ENCODE measurements at regions of chrX and their contacts with region 1.

Region 1: DNA sequence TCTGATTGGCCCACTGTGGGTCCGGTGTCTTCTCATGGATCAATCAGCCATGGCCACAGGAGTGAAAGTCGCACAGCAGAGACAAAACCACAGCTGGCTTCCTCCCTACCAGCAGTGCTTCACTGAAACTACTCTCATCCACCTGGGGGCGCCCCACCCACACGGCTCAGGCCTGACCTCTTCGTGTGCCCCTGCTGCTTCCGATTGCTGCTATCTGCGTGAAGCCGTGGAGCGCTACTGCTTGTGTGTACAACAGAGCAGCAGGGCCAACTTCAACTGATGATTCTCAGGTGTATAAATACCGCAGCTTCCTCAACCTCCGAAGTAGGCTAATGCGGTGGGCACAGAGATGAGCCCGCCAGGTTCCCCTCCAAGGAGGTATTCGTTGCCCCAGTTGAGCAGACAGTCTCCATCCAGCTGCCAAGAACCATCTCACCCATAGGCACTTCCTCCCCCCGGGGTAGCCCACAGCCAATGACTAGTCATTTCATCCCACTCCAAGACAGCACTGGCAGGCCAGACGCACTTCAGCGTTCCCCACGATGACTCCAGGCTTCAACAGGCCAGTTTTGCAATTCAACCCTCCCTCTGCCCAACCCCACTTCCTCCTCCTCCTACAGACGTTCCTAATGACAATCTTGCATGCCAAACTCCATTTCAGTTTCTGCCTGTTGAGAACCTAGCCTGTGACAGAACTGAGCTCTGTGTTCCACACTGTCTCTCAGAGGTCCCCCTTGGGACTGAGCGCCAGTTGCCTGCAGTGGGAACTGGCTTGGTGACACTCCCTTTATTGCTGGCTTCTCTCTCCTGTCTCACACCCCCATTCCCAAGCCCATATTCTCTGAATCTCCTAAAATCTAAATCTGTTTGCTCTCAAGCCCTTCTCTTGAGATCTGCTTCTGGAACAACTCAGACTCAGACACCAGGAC is 41.3 kb upstream of the ATP6AP2 start:
- DNase-seq: peak; percentile 19
- ATAC-seq: peak; percentile 77
- H3K4me3 Mint-ChIP-seq: peak overlapping the region; percentile 41
- H3K27ac Mint-ChIP-seq: no peak overlapping the region
- H3K4me1 Mint-ChIP-seq: peaks cover 16% of the 10 kb centered on the region
- H3K27me3 Mint-ChIP-seq: no peaks in the 10 kb centered on the region
- CTCF ChIP-seq: no peak

Region 2: DNA sequence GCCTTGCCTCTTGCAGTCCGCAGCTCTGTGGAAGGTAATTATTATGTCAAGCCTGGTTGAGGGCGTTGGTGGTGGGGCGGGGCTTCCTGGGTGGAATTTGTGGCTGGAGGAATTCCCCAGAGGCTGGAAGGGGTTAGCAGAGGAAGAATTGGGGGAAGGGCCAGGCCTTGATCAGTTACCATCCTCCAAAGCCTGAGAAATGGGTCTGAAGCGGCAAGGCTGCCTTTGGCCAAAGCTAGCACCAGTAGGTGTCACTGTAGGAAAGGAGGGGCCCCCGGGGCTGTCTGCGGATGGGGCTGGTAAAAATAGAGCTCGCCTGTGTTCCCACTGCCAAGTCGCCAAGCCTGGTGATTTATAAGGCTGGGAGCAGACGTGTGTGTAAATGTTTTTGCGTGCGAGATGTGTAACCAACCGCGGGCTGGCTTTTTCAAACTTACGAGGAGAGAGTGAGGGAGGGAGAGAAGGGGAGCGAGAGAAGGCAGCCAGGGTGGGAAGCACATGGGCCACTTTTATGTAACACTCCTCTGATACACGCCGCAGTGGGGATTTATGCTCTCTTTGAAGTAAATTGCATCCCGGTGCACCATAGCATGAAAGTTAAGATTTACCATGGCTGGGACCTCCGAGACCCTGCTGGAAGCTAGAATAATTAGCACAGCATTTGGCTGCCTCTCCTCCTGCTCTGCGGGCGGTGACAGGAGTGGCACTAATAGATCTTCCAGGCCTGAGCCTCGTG is 808.6 kb before region 1 on chrX:
- CTCF ChIA-PET with region 1: interaction called, 4 read pairs
- POLR2A ChIA-PET with region 1: no interaction called
- intact Hi-C with region 1: loop called (anchors 5 kb)
- DNase-seq: no peak
- ATAC-seq: peak; percentile 64
- H3K4me3 Mint-ChIP-seq: peak overlapping the region; percentile 53
- H3K27ac Mint-ChIP-seq: no peak overlapping the region
- H3K4me1 Mint-ChIP-seq: peaks cover 5% of the 10 kb centered on the region
- H3K27me3 Mint-ChIP-seq: peaks cover 8% of the 10 kb centered on the region
- CTCF ChIP-seq: no peak

Region 3: DNA sequence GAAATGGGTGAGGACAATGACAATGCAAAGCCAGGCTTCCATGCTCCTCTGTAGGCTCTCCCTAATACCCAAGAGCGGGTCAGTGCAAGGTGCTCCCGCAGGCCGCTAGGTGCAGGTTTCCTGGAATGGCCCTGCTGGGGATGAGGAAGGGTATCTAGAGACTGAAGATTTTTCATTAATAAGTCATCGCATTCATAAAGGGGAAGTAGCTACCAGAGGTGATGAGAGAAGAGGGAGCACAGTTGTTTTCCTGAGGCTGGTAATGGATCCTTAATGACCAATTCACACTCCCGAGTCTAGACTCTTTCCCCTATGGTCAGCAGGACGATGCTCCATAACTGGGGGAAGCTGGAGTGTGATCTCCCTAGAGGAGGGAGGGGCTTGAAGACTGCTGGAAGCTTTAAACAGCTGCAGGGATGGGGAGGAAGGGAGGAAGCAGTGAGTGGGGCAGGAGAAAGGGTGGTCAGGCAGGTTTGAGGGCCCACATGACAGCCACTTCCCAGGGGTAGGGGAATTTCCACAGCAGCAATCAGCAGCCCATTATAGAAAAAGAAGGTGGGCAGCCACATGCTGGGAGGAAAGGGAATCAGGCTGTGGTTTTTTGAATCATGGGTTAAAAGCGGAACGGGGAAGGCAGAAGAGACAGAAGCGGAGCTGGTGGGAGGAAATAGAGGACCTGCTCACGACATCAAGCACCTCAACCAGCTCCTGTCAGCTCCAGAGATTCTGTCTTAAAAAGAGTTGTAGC is 31.0 kb after region 1 on chrX:
- CTCF ChIA-PET with region 1: interaction called, 6 read pairs
- POLR2A ChIA-PET with region 1: no interaction called
- intact Hi-C with region 1: loop called (anchors 2 kb)
- DNase-seq: peak; percentile 15
- ATAC-seq: peak; percentile 62
- H3K4me3 Mint-ChIP-seq: peak overlapping the region; percentile 79
- H3K27ac Mint-ChIP-seq: peak overlapping the region; percentile 77
- H3K4me1 Mint-ChIP-seq: peaks cover 19% of the 10 kb centered on the region
- H3K27me3 Mint-ChIP-seq: no peaks in the 10 kb centered on the region
- CTCF ChIP-seq: no peak

Region 4: GRCh38 chrX:40647307-40648197 is 108.1 kb after region 1 on chrX and contains the start of gene CXorf38:
- CTCF ChIA-PET with region 1: interaction called, 25 read pairs
- POLR2A ChIA-PET with region 1: no interaction called
- intact Hi-C with region 1: loop called (anchors 1 kb)
- DNase-seq: peak; percentile 83
- ATAC-seq: peak; percentile 67
- H3K4me3 Mint-ChIP-seq: peak within 1 kb of the TSS; percentile 94
- H3K27ac Mint-ChIP-seq: peak within 1 kb of the TSS; percentile 93
- H3K4me1 Mint-ChIP-seq: peaks cover 39% of the 10 kb centered on the region
- H3K27me3 Mint-ChIP-seq: no peaks in the 10 kb centered on the region
- CTCF ChIP-seq: no peak
- total RNA-seq, gene CXorf38: 20.9 and 21.9 TPM in 2 replicates

Region 5: GRCh38 chrX:40773809-40774208 is 234.3 kb after region 1 on chrX:
- CTCF ChIA-PET with region 1: no interaction called
- POLR2A ChIA-PET with region 1: no interaction called
- intact Hi-C with region 1: no loop called
- DNase-seq: no peak
- ATAC-seq: no peak
- H3K4me3 Mint-ChIP-seq: no peak overlapping the region
- H3K27ac Mint-ChIP-seq: no peak overlapping the region
- H3K4me1 Mint-ChIP-seq: no peaks in the 10 kb centered on the region
- H3K27me3 Mint-ChIP-seq: no peaks in the 10 kb centered on the region
- CTCF ChIP-seq: no peak

Region 6: GRCh38 chrX:40792433-40792832 is 253.0 kb after region 1 on chrX:
- CTCF ChIA-PET with region 1: interaction called, 15 read pairs
- POLR2A ChIA-PET with region 1: no interaction called
- intact Hi-C with region 1: loop called (anchors 1 kb)
- DNase-seq: no peak
- ATAC-seq: no peak
- H3K4me3 Mint-ChIP-seq: no peak overlapping the region
- H3K27ac Mint-ChIP-seq: no peak overlapping the region
- H3K4me1 Mint-ChIP-seq: peaks cover 1% of the 10 kb centered on the region
- H3K27me3 Mint-ChIP-seq: peaks cover 3% of the 10 kb centered on the region
- CTCF ChIP-seq: no peak

Region 7: GRCh38 chrX:41116948-41117347 is 577.5 kb after region 1 on chrX:
- CTCF ChIA-PET with region 1: interaction called, 4 read pairs
- POLR2A ChIA-PET with region 1: no interaction called
- intact Hi-C with region 1: loop called (anchors 10 kb)
- DNase-seq: no peak
- ATAC-seq: peak; percentile 58
- H3K4me3 Mint-ChIP-seq: peak overlapping the region; percentile 40
- H3K27ac Mint-ChIP-seq: peak overlapping the region; percentile 79
- H3K4me1 Mint-ChIP-seq: peaks cover 71% of the 10 kb centered on the region
- H3K27me3 Mint-ChIP-seq: no peaks in the 10 kb centered on the region
- CTCF ChIP-seq: no peak

Region 8: DNA sequence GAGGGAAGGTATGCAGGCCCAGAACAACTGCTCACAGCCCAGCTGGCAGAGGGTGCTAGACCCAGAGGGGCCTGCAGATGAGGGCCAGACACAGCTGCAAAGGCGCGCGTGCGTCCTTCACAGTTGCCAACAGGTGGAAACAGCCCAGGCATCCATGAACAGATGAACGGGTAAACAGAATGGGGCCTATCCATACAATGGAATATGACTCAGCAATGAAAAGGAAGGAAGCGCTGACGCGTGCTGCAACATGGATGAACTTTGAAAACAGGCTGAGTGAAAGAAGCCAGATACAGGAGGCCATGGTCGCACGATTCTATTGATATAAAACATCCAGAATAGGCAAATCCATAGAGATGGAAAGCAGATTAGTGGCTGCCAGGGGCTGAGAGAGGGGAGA is 711.4 kb after region 1 on chrX:
- CTCF ChIA-PET with region 1: no interaction called
- POLR2A ChIA-PET with region 1: no interaction called
- intact Hi-C with region 1: loop called (anchors 5 kb)
- DNase-seq: no peak
- ATAC-seq: no peak
- H3K4me3 Mint-ChIP-seq: no peak overlapping the region
- H3K27ac Mint-ChIP-seq: no peak overlapping the region
- H3K4me1 Mint-ChIP-seq: peaks cover 7% of the 10 kb centered on the region
- H3K27me3 Mint-ChIP-seq: no peaks in the 10 kb centered on the region
- CTCF ChIP-seq: no peak